SK-N-SH (cell line): ENCODE measurements at regions of chr10 and their contacts with region 1.

Region 1: GRCh38 chr10:70146489-70147258 is at the start of gene TYSND1:
- DNase-seq: peak; percentile 96
- H3K4me3 ChIP-seq: peak within 1 kb of the TSS; percentile 68 to 71
- H3K27ac ChIP-seq: peak within 1 kb of the TSS; percentile 91 to 92
- H3K4me1 ChIP-seq: peaks cover 5 to 27% of the 10 kb centered on the region in 2 experiments; a peak in 3 of 4 replicates
- H3K27me3 ChIP-seq: no peaks in the 10 kb centered on the region
- CTCF ChIP-seq: peak; percentile 60
- EP300 ChIP-seq: no peak; a peak in 1 of 4 replicates
- RAD21 ChIP-seq: peak; percentile 73
- polyA plus RNA-seq, gene TYSND1: 7.2 and 7.4 TPM in 2 replicates

Region 2: GRCh38 chr10:69968830-69969229 is 177.8 kb before region 1 on chr10:
- CTCF ChIA-PET with region 1: interaction called, 14 read pairs
- POLR2A ChIA-PET with region 1: interaction called, 7 read pairs
- DNase-seq: peak; percentile 45
- H3K4me3 ChIP-seq: no peak overlapping the region
- H3K27ac ChIP-seq: no peak overlapping the region
- H3K4me1 ChIP-seq: peaks cover 7 to 19% of the 10 kb centered on the region in 2 experiments
- H3K27me3 ChIP-seq: no peaks in the 10 kb centered on the region
- CTCF ChIP-seq: peak; percentile 40
- EP300 ChIP-seq: no peak
- RAD21 ChIP-seq: peak; percentile 87

Region 3: GRCh38 chr10:70115948-70116682 is 30.6 kb before region 1 on chr10:
- CTCF ChIA-PET with region 1: interaction called, 157 read pairs
- POLR2A ChIA-PET with region 1: interaction called, 5 read pairs
- DNase-seq: peak; percentile 80
- H3K4me3 ChIP-seq: no peak overlapping the region
- H3K27ac ChIP-seq: no peak overlapping the region
- H3K4me1 ChIP-seq: peaks cover 0 to 3% of the 10 kb centered on the region in 2 experiments; a peak in 1 of 4 replicates
- H3K27me3 ChIP-seq: no peaks in the 10 kb centered on the region
- CTCF ChIP-seq: peak; percentile 93
- EP300 ChIP-seq: no peak
- RAD21 ChIP-seq: peak; percentile 51

Region 4: DNA sequence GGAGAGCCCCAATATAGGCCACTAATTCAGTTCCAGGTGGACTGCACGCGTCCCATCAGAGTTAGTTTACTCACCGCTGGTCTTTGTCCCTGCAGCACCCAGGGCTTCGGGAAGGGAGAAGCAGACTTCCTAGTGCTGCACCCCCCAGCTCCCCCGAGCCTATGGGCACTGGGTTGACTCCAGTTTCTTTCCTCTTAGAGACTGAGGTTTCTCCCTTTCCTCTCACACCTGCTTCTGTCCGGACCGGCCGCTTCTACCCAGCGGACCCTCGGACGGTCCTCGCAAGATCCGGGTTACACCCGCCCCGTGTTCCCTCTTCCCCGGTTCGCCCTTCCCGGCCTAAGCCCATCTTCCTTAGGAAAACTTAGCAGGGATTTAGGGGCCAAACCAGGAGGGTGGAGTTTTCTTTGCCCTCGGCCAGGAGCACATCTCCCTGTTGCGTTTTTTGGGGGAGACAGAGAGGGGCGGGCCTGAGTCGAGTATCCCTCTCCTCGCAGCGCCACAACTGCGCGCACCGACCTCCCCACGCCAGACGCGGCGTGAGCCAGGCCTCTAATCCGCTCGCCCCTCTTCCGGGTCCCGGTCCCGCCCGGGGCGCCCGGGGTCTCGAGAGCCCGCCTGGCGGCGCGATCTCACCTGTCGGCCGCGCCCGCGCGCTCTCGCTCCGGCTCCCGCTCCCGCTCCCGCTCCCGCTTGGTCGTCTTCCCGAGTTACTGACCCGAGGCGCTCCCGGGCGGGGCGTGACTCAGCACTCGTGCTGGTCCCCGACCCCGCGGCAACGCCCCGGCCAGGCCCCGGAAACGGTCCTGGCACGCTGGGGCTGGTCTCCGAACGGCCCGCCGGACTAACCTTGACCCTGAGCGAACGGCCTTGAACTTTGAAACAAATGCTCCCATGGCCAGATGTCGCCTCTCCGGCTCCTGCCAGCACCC is 14.3 kb before region 1 on chr10 and contains the start of gene AIFM2:
- CTCF ChIA-PET with region 1: interaction called, 38 read pairs
- POLR2A ChIA-PET with region 1: no interaction called
- DNase-seq: peak; percentile 87
- H3K4me3 ChIP-seq: peak within 1 kb of the TSS; percentile 45 to 58
- H3K27ac ChIP-seq: 0 out of 4 replicates have a peak within 1 kb of the TSS, but pooled peaks of 1 of the 2 experiments have one; percentile 11
- H3K4me1 ChIP-seq: peaks cover 0 to 3% of the 10 kb centered on the region in 2 experiments; a peak in 1 of 4 replicates
- H3K27me3 ChIP-seq: no peaks in the 10 kb centered on the region
- CTCF ChIP-seq: no peak
- EP300 ChIP-seq: no peak
- RAD21 ChIP-seq: no peak
- polyA plus RNA-seq, gene AIFM2: 9.4 and 9.5 TPM in 2 replicates

Region 5: GRCh38 chr10:70221030-70221429 is 74.4 kb after region 1 on chr10:
- CTCF ChIA-PET with region 1: interaction called, 21 read pairs
- POLR2A ChIA-PET with region 1: no interaction called
- DNase-seq: no peak
- H3K4me3 ChIP-seq: no peak overlapping the region
- H3K27ac ChIP-seq: peak overlapping the region in 1 of 2 experiments; percentile 45; a peak in 3 of 4 replicates
- H3K4me1 ChIP-seq: peaks cover 0 to 4% of the 10 kb centered on the region in 2 experiments; a peak in 2 of 4 replicates
- H3K27me3 ChIP-seq: no peaks in the 10 kb centered on the region
- CTCF ChIP-seq: no peak
- EP300 ChIP-seq: no peak
- RAD21 ChIP-seq: no peak